ENCODE measurements at regions of chr5 and their contacts with region 1.

Region 1: DNA sequence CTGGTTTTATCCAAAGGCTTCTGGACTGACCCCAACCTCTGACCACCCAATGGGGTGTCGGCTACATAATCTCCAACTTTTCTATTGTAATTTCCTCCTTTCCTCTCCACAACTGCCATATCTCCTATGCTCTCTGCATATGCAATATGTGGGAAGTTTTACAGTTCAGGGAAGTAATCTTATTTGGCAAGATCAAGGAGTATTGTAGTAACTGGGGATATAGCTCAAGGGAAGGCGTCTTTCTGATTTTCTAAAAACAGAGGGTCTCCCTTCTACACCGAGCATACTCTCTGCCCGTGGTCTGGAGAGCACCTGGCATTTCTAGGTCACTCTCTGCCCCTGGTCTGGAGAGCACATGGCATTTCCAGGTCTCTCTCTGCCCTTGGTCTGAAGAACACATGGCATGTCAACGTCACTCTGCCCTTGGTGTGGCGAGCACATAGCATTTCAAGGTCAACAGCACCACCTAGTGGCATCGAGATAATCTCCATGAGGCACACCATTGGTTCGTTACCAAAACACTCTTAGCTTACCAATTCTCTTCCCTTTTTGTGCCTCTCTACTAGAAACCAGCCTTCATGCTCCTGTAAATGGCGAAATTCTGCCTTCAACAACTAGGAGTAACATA is 616.4 kb upstream of the NUDT12 start:
- DNase-seq: no peak
- ATAC-seq: peak in 2 of 4 donors; percentile 56 to 68
- H3K4me3 ChIP-seq: no peak overlapping the region
- H3K27ac ChIP-seq: no peak overlapping the region
- H3K4me1 ChIP-seq: no peaks in the 10 kb centered on the region
- H3K27me3 ChIP-seq: no peaks in the 10 kb centered on the region
- CTCF ChIP-seq: peak; percentile 35

Region 2: DNA sequence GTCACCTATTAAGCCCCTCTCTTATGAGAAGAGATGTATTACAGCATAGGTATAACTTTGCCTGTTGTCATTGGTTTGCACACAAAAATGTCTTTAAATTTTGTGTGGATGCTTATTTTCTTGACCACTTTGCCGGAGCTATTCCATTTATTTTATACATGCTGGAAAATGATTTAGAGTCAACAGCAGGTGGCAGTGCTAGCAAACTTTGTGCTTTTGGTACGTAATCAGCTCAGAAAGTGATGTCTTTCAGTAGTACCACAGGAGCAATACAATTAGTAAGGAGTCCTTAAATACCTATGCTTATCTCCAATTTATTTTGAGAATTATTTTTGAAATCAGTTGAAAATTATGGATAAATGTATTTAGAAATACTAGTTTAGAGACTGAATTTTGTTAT is 596.6 kb before region 1 on chr5:
- intact Hi-C with region 1: loop called (anchors 5 to 10 kb)
- DNase-seq: no peak
- ATAC-seq: peak in 1 of 4 donors; percentile 48
- H3K4me3 ChIP-seq: no peak overlapping the region
- H3K27ac ChIP-seq: no peak overlapping the region
- H3K4me1 ChIP-seq: no peaks in the 10 kb centered on the region
- H3K27me3 ChIP-seq: no peaks in the 10 kb centered on the region
- CTCF ChIP-seq: peak; percentile 53